Activated CD4-positive, alpha-beta memory T cell treated with anti-CD3 and anti-CD28 coated beads for 36 hours (primary cell): ENCODE measurements at regions of chr3 and their contacts with region 1.

Region 1: GRCh38 chr3:32313723-32314473 is 75.4 kb downstream of the CMTM8 start:
- DNase-seq: peak; percentile 49
- H3K4me3 Mint-ChIP-seq: peak overlapping the region; percentile 77
- H3K27ac Mint-ChIP-seq: peak overlapping the region; percentile 84
- H3K4me1 Mint-ChIP-seq: peaks cover 38% of the 10 kb centered on the region
- H3K27me3 Mint-ChIP-seq: no peaks in the 10 kb centered on the region

Region 2: DNA sequence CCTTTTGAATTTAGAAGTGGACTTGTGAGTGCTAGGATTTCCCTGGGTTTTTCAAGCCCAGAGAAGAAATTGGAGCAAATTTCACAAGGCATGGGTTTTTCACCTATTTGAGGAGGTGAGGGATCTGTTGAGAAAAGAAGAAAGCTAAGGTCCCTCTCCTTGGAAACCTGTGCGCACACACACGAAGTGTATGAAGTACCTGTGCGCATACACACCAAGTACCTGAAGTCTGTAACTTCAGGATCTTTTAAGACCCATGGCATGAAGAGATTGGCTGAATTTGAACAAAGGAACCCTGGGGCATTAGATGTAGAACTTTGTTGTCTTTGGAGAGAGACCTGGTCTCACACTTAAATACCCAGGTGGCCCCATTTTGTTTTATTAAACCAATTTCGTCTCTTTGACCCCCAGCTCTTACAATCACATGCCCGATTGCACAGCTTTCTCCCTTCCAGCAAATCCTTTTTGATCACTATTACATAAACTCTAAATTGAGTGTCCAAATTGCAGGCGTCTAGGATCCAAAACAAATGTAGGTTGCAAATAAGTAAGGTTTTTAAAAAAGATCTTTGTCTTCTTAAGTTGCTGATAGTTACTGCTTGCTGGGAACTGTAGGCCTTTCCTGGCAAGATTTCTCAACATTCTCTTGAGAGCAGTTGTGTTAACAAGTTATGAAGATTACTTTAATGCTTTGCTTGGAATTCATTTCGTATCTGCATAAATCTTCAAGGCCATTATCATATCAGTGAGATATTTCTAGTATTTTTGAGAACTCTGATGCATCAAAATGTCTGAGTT is 11.1 kb before region 1 on chr3:
- CTCF ChIA-PET with region 1: interaction called, 12 read pairs
- POLR2A ChIA-PET with region 1: interaction called, 3 read pairs
- intact Hi-C with region 1: loop called (anchors 1 kb)
- DNase-seq: no peak
- H3K4me3 Mint-ChIP-seq: peak overlapping the region; percentile 60
- H3K27ac Mint-ChIP-seq: peak overlapping the region; percentile 86
- H3K4me1 Mint-ChIP-seq: peaks cover 66% of the 10 kb centered on the region
- H3K27me3 Mint-ChIP-seq: no peaks in the 10 kb centered on the region

Region 3: GRCh38 chr3:32334675-32335074 is 20.8 kb after region 1 on chr3:
- CTCF ChIA-PET with region 1: interaction called, 19 read pairs
- POLR2A ChIA-PET with region 1: no interaction called
- intact Hi-C with region 1: loop called (anchors 2 kb)
- DNase-seq: peak; percentile 80
- H3K4me3 Mint-ChIP-seq: no peak overlapping the region
- H3K27ac Mint-ChIP-seq: no peak overlapping the region
- H3K4me1 Mint-ChIP-seq: peaks cover 48% of the 10 kb centered on the region
- H3K27me3 Mint-ChIP-seq: no peaks in the 10 kb centered on the region